A673 (cell line): ENCODE measurements at regions of chr10 and their contacts with region 1.

Region 1: DNA sequence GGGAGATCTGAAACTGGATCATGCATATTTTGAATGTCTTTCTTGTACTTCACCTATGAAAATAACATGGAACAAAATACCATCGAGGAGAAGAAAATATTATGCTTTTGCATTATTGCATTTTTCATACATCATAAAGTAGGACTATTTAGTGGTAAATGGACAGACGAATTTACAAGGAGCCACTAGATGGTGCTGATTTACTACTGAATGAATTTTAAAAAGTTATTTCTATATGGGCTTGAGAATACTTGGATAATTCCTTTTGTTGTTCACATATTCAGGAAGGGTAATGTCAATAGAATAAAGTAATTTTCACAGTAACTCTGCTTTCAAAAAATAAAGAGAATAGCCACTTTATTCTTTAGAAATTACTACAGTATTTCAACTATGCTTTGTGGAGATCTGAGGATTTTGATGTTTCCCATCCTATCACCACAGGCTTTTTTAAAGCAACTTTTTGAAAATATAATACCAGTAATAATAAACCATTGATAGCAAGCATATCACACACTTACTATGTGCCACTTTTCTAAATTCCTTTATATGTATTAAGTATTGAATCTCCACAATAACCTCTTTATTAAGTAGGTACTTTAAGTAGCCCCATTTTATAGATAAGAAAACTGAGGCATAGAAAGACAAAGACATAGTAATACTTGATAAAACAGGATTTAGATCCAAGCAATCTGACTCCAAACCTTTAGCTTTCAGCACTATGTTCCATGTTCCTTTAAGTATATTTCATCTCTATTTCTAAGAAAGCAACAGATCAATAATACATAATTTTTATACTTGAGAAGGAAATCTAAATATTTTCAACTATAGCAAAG is 38.6 kb downstream of the NEBL start:
- DNase-seq: peak; percentile 62
- H3K4me3 ChIP-seq: no peak overlapping the region
- H3K27ac ChIP-seq: no peak overlapping the region
- H3K4me1 ChIP-seq: peaks cover 9% of the 10 kb centered on the region
- H3K27me3 ChIP-seq: no peaks in the 10 kb centered on the region
- CTCF ChIP-seq: peak; percentile 73

Region 2: GRCh38 chr10:19412531-19412930 is 1446.0 kb before region 1 on chr10:
- CTCF ChIA-PET with region 1: interaction called, 3 read pairs
- POLR2A ChIA-PET with region 1: no interaction called
- intact Hi-C with region 1: loop called (anchors 10 kb)
- DNase-seq: peak; percentile 72
- H3K4me3 ChIP-seq: no peak overlapping the region
- H3K27ac ChIP-seq: no peak overlapping the region
- H3K4me1 ChIP-seq: no peaks in the 10 kb centered on the region
- H3K27me3 ChIP-seq: no peaks in the 10 kb centered on the region
- CTCF ChIP-seq: peak; percentile 67

Region 3: GRCh38 chr10:20207653-20208052 is 650.9 kb before region 1 on chr10:
- CTCF ChIA-PET with region 1: no interaction called
- POLR2A ChIA-PET with region 1: no interaction called
- intact Hi-C with region 1: no loop called
- DNase-seq: no peak
- H3K4me3 ChIP-seq: no peak overlapping the region
- H3K27ac ChIP-seq: no peak overlapping the region
- H3K4me1 ChIP-seq: no peaks in the 10 kb centered on the region
- H3K27me3 ChIP-seq: no peaks in the 10 kb centered on the region
- CTCF ChIP-seq: no peak

Region 4: DNA sequence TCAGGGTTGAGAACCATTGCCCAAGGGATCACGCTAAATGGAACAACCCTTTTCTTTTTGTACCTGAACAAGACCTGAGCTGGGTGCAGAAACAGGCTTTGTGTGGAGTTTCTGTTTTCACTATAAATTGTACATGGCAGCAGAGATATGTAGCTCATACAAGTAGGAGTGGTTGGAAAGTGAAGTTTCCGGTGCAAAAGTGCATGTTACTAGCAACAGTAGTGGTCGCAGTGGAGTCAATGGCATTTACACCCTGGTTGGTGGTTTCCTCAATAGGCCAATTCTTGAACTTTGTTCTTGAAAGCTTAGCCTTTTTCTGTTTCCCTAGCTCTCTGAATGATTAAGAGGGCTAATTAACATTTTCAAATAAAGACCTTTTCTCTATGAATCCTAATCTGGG is 132.1 kb before region 1 on chr10:
- CTCF ChIA-PET with region 1: no interaction called
- POLR2A ChIA-PET with region 1: no interaction called
- intact Hi-C with region 1: no loop called
- DNase-seq: no peak
- H3K4me3 ChIP-seq: no peak overlapping the region
- H3K27ac ChIP-seq: no peak overlapping the region
- H3K4me1 ChIP-seq: no peaks in the 10 kb centered on the region
- H3K27me3 ChIP-seq: no peaks in the 10 kb centered on the region
- CTCF ChIP-seq: no peak

Region 5: DNA sequence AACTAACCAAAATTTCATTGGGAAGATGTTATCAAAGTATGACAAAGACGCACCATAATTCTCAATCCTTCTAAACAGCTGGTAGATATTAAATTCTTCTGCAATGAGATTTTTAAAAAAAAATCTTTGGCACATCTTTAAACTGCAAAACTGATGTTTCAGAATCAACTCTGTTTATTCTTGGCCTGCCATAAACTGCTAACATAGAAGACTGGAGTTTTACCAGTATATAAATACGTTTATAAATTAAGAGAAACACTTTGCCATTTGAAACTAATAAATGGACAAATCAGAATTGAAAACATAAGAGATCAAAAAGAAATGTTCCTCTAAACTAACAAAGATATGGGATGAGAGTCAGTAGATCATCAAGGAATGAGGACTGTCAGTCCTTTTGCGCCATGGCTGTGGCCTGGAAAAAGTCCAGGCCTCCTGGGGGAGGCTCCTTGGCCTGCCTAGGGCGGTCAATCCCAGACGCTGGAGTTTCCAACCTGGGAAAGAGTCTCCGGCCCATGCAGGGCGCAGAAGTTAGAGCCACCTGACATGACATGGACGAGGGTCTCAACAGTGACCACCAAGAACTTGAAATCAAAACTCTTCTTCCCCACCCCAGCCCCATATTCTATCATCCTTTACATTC is 72.8 kb after region 1 on chr10:
- CTCF ChIA-PET with region 1: no interaction called
- POLR2A ChIA-PET with region 1: no interaction called
- intact Hi-C with region 1: no loop called
- DNase-seq: no peak
- H3K4me3 ChIP-seq: no peak overlapping the region
- H3K27ac ChIP-seq: no peak overlapping the region
- H3K4me1 ChIP-seq: no peaks in the 10 kb centered on the region
- H3K27me3 ChIP-seq: no peaks in the 10 kb centered on the region
- CTCF ChIP-seq: no peak

Region 6: DNA sequence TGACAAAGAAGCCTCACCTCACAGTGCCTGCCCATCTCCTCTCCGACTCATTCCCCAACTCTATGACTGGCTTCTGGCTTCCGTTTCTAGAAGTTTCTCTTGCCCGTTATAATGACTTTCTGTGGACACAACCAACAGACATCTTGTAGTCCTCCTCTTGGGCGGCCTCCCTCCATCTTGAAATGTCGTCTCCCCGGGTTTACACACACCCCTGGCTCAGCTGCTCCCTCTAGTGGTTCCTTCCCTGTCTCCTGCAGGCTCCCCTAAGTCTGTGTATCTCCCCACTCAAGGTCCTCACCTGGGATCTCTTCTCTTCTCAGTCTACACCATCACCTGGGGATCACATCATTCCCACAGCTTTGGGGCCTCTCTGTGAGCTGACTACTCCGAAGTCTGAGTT is 162.0 kb after region 1 on chr10:
- CTCF ChIA-PET with region 1: no interaction called
- POLR2A ChIA-PET with region 1: no interaction called
- intact Hi-C with region 1: loop called (anchors 10 kb)
- DNase-seq: peak; percentile 58
- H3K4me3 ChIP-seq: no peak overlapping the region
- H3K27ac ChIP-seq: no peak overlapping the region
- H3K4me1 ChIP-seq: no peaks in the 10 kb centered on the region
- H3K27me3 ChIP-seq: no peaks in the 10 kb centered on the region
- CTCF ChIP-seq: peak; percentile 75

Region 7: DNA sequence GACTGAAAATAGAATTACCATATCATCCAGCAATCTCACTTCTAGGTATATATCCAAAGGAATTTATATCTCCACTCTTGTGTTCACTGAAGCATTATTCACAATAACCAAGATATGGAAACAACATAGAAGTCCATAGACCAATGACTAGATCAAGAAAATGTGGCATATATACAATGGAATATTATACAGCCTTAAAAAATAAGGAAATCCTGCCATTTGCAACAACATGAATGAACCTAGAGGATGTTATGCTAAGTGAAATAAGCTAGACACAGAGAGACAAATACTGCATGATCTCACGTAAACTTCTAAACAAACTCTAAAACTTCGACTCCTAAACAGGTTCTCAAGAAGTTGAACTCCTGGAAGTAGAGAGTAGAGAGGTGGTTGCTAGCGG is 412.5 kb after region 1 on chr10:
- CTCF ChIA-PET with region 1: no interaction called
- POLR2A ChIA-PET with region 1: no interaction called
- intact Hi-C with region 1: loop called (anchors 2 kb)
- DNase-seq: no peak
- H3K4me3 ChIP-seq: no peak overlapping the region
- H3K27ac ChIP-seq: no peak overlapping the region
- H3K4me1 ChIP-seq: no peaks in the 10 kb centered on the region
- H3K27me3 ChIP-seq: no peaks in the 10 kb centered on the region
- CTCF ChIP-seq: no peak